ENCODE measurements at regions of chr10 and their contacts with region 1.

Region 1: DNA sequence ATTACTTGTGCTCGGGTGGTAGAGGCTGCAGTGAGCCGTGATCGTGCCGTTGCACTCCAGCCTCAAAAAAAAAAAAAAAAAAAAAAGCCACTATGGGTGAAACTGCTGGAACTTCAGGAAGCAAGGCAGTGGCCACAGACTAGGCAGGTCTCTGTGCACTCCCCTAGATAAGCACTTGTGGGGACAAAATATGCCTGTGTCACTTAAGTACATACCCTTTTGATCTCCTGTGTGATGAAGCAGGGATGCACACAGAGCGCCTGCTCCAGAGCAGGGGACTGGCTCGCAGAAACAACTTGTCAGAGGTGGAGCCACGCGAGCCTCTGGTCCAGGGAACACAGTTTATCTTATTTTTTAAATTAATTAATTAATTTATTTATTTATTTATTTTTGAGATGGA is 42.9 kb upstream of the PSAP start:
- DNase-seq: peak in 1 of 3 donors; percentile 22
- ATAC-seq: no peak
- H3K4me3 ChIP-seq: no peak overlapping the region
- H3K27ac ChIP-seq: no peak overlapping the region
- H3K4me1 ChIP-seq: peaks cover 0 to 4% (median 0%) of the 10 kb centered on the region in 4 donors
- H3K27me3 ChIP-seq: no peaks in the 10 kb centered on the region
- CTCF ChIP-seq: no peak
- POLR2A ChIP-seq: no peak

Region 2: DNA sequence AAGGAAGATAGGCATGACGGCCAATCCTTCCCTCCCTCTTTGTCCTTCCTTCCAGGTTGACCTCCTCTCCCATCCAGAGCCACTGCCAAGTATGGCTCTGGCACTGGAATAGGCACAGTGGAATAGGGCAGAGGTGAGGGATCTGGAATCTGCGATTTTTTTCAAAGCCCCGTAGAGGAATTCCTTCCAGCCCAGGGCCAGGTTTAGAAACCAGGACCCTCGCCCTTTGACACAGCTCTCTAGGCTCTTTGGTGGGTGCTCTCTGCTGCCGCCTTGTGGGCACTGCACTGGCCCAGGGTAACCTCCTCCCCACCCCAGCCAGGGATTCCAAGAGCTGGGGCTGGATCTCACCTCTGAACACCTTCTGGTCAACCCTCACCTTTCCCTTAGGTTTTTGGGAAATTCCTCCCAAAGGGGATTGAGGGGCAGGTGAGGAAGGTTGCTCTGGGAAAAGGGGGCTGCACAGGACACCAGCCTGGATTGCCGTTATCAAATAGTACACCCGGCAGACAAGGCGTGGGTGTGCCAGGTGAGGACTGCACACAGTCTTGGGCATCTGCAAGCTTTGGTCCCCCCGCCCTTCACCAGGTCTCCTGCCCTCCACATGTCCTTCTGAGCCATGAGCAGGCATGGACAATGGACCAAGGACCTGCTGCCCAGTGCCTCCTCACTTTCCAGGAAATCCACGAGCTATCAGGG is 197.1 kb before region 1 on chr10:
- intact Hi-C with region 1: no loop called
- DNase-seq: peak in 1 of 3 donors; percentile 71
- ATAC-seq: peak; percentile 71 to 80 (median 72)
- H3K4me3 ChIP-seq: no peak overlapping the region
- H3K27ac ChIP-seq: no peak overlapping the region
- H3K4me1 ChIP-seq: no peaks in the 10 kb centered on the region
- H3K27me3 ChIP-seq: no peaks in the 10 kb centered on the region
- CTCF ChIP-seq: peak; percentile 74 to 92 (median 87)
- POLR2A ChIP-seq: no peak

Region 3: GRCh38 chr10:72048450-72049124 is 154.7 kb after region 1 on chr10:
- intact Hi-C with region 1: loop called in 1 of 2 experiments (anchors 10 kb)
- DNase-seq: peak; percentile 83 to 92 (median 88)
- ATAC-seq: peak; percentile 98 to 99 (median 98)
- H3K4me3 ChIP-seq: no peak overlapping the region
- H3K27ac ChIP-seq: no peak overlapping the region
- H3K4me1 ChIP-seq: peaks cover 0 to 3% (median 0%) of the 10 kb centered on the region in 4 donors
- H3K27me3 ChIP-seq: no peaks in the 10 kb centered on the region
- CTCF ChIP-seq: peak; percentile 98 to 100 (median 100)
- POLR2A ChIP-seq: no peak